B cell (primary cell): ENCODE measurements at regions of chr2 and their contacts with region 1.

Region 1: GRCh38 chr2:159904127-159904958 is 106.3 kb upstream of the CD302 start:
- DNase-seq: peak; percentile 90
- ATAC-seq: peak; percentile 85
- H3K4me3 ChIP-seq: peak within 1 kb of the TSS; percentile 69 to 96 (median 79)
- H3K4me3 Mint-ChIP-seq: peak within 1 kb of the TSS; percentile 100
- H3K27ac ChIP-seq: peak within 1 kb of the TSS; percentile 85 to 87
- H3K27ac Mint-ChIP-seq: peak within 1 kb of the TSS; percentile 99
- H3K4me1 ChIP-seq: peaks cover 7 to 26% of the 10 kb centered on the region in 2 donors
- H3K4me1 Mint-ChIP-seq: peaks cover 41% of the 10 kb centered on the region
- H3K27me3 ChIP-seq: no peaks in the 10 kb centered on the region
- H3K27me3 Mint-ChIP-seq: no peaks in the 10 kb centered on the region
- CTCF ChIP-seq: no peak

Region 2: GRCh38 chr2:159921752-159922404 is 17.5 kb after region 1 on chr2:
- CTCF ChIA-PET with region 1: interaction called, 18 read pairs
- POLR2A ChIA-PET with region 1: no interaction called
- intact Hi-C with region 1: no loop called
- DNase-seq: peak; percentile 75
- ATAC-seq: peak; percentile 96
- H3K4me3 ChIP-seq: no peak overlapping the region
- H3K4me3 Mint-ChIP-seq: no peak overlapping the region
- H3K27ac ChIP-seq: no peak overlapping the region
- H3K27ac Mint-ChIP-seq: no peak overlapping the region
- H3K4me1 ChIP-seq: peaks cover 0 to 9% of the 10 kb centered on the region in 2 donors
- H3K4me1 Mint-ChIP-seq: peaks cover 12% of the 10 kb centered on the region
- H3K27me3 ChIP-seq: no peaks in the 10 kb centered on the region
- H3K27me3 Mint-ChIP-seq: peaks cover 3% of the 10 kb centered on the region
- CTCF ChIP-seq: peak; percentile 82